Lower lobe of right lung (tissue), 2 donors: ENCODE measurements at regions of chr12 and their contacts with region 1.

Region 1: GRCh38 chr12:95810411-95810810 is 19.8 kb upstream of the NTN4 start:
- DNase-seq: no peak
- ATAC-seq: no peak
- H3K4me3 ChIP-seq: no peak overlapping the region
- H3K27ac ChIP-seq: no peak overlapping the region
- H3K4me1 ChIP-seq: no peaks in the 10 kb centered on the region
- H3K27me3 ChIP-seq: no peaks in the 10 kb centered on the region
- CTCF ChIP-seq: no peak

Region 2: GRCh38 chr12:95582230-95583058 is 228.0 kb before region 1 on chr12:
- intact Hi-C with region 1: loop called (anchors 5 kb)
- DNase-seq: no peak
- ATAC-seq: peak in 1 of 2 donors; percentile 67
- H3K4me3 ChIP-seq: no peak overlapping the region
- H3K27ac ChIP-seq: no peak overlapping the region
- H3K4me1 ChIP-seq: no peaks in the 10 kb centered on the region
- H3K27me3 ChIP-seq: no peaks in the 10 kb centered on the region
- CTCF ChIP-seq: peak; percentile 50

Region 3: GRCh38 chr12:96548384-96548783 is 738.0 kb after region 1 on chr12:
- intact Hi-C with region 1: no loop called
- DNase-seq: no peak
- ATAC-seq: no peak
- H3K4me3 ChIP-seq: no peak overlapping the region
- H3K27ac ChIP-seq: no peak overlapping the region
- H3K4me1 ChIP-seq: no peaks in the 10 kb centered on the region
- H3K27me3 ChIP-seq: no peaks in the 10 kb centered on the region
- CTCF ChIP-seq: no peak